Psoas muscle (tissue), 8 donors: ENCODE measurements at regions of chr10 and their contacts with region 1.

Region 1: DNA sequence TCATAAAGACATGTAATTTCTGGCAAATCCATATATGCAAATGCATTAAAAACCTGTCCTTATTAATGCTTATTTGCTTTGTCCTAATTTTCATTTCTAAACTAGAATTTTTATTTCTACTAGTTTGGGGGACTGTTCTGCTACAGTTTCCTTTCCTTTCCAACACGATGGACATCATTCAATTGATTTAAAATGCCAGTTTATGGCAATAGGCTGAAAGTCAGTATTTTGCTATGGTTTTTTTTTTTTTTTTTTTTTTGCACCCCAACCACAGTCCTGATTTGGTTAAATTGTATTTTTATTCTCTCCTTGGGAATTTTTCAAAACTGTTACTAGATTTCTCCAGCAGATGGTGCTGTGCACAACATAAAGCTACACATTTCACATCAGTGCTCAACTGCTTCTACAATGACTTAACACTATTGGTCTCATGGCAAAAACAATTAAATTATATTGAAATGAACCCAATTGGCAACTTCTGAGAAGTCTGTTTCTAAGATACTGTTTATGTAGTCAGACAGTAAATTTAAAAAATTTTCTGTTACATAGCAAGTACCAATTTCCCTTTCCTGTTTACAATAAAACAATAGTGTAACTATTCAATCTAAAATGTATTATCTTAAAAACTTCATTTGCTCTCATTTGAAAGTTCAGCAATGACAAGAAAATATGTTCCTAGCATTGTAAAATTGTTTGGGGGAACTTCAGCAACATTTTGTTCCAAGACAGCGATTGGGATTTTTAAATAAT is 193.8 kb upstream of the CCDC6 start:
- DNase-seq: no peak
- ATAC-seq: peak; percentile 63 to 90 (median 76)
- H3K4me3 ChIP-seq: no peak overlapping the region
- H3K27ac ChIP-seq: peak overlapping the region; percentile 33
- H3K4me1 ChIP-seq: no peaks in the 10 kb centered on the region
- H3K27me3 ChIP-seq: no peaks in the 10 kb centered on the region
- CTCF ChIP-seq: peak; percentile 70

Region 2: DNA sequence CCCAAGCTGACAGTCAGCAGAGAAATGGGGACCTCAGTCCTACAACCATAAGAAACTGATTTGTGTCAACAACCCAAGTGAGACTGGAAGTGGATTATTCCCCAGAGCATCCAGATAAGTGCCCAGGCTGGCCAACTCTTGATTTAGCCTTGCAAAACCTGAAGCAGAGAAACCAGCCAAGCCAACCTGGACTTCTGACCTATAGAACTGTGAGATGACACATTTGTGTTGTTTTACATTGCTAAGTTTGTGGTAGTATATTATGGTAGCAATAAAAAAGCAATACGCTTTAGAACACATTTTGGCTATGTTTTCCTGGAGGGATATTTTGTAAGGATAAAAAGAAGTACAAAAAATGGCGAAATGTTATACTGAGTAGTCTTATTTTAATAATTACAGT is 174.1 kb before region 1 on chr10:
- intact Hi-C with region 1: no loop called
- DNase-seq: no peak
- ATAC-seq: no peak
- H3K4me3 ChIP-seq: no peak overlapping the region
- H3K27ac ChIP-seq: no peak overlapping the region
- H3K4me1 ChIP-seq: no peaks in the 10 kb centered on the region
- H3K27me3 ChIP-seq: no peaks in the 10 kb centered on the region
- CTCF ChIP-seq: no peak

Region 3: GRCh38 chr10:60008816-60009215 is 91.4 kb before region 1 on chr10:
- intact Hi-C with region 1: no loop called
- DNase-seq: no peak
- ATAC-seq: no peak
- H3K4me3 ChIP-seq: no peak overlapping the region
- H3K27ac ChIP-seq: no peak overlapping the region
- H3K4me1 ChIP-seq: no peaks in the 10 kb centered on the region
- H3K27me3 ChIP-seq: no peaks in the 10 kb centered on the region
- CTCF ChIP-seq: no peak

Region 4: DNA sequence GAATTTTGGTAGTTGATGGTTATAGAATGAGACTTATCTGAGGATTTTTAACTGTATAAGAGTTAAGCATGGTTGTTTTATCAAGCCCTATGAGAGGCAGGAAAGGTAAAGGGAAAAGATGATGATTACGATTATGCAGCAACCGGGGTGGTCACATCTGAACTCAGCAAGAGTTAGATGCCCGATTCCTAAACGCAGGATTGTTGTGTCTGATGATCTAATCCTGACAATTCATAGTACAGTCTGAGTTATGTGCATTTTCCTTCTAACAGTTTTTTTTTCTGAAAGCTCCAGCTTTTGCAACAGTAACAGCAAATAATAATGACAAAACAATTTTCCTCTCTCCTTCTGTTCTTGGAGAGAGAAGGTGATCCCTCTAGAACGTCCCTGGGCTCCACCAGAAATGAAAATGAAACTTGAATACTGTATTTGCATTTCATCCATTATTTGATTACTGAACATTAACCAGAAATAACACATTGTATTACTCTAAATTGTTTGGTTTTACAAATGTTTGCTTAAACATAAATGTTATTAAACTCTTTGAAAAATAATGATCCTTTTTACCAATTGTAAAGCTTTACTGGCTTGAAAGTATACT is 17.3 kb before region 1 on chr10:
- intact Hi-C with region 1: no loop called
- DNase-seq: no peak
- ATAC-seq: no peak
- H3K4me3 ChIP-seq: no peak overlapping the region
- H3K27ac ChIP-seq: no peak overlapping the region
- H3K4me1 ChIP-seq: no peaks in the 10 kb centered on the region
- H3K27me3 ChIP-seq: no peaks in the 10 kb centered on the region
- CTCF ChIP-seq: no peak

Region 5: DNA sequence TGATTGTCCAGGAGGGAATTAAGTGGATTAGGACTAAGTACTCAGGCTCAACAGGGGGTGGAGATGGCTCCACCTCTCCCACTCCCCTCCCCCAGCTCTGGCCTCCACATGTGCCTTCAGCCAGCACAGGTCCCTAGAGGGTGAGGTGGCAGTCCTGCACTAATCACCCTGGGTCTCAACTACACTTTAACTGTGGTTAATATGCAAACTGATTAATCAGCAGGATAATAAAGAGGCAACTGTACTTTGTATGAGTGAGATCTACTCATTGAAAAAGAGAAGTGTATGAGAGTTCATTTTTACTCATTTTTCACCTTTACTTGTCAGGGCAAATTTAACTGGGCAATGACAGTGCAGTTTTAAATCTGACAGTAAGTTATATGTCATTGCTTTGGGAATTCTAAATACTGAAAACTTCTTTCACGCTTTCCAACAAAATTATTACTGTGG is 30.0 kb after region 1 on chr10:
- intact Hi-C with region 1: no loop called
- DNase-seq: peak in 1 of 2 donors; percentile 50
- ATAC-seq: peak in 3 of 4 donors; percentile 51 to 82 (median 66)
- H3K4me3 ChIP-seq: no peak overlapping the region
- H3K27ac ChIP-seq: peak overlapping the region; percentile 41
- H3K4me1 ChIP-seq: peaks cover 23% of the 10 kb centered on the region
- H3K27me3 ChIP-seq: no peaks in the 10 kb centered on the region
- CTCF ChIP-seq: no peak

Region 6: GRCh38 chr10:60208676-60209269 is 108.6 kb after region 1 on chr10:
- intact Hi-C with region 1: loop called (anchors 2 to 5 kb)
- DNase-seq: no peak
- ATAC-seq: peak; percentile 57 to 88 (median 71)
- H3K4me3 ChIP-seq: no peak overlapping the region
- H3K27ac ChIP-seq: no peak overlapping the region
- H3K4me1 ChIP-seq: no peaks in the 10 kb centered on the region
- H3K27me3 ChIP-seq: no peaks in the 10 kb centered on the region
- CTCF ChIP-seq: peak; percentile 78